Naive thymus-derived CD4-positive, alpha-beta T cell (primary cell): ENCODE measurements at regions of chr4 and their contacts with region 1.

Region 1: GRCh38 chr4:77095101-77095821 is 19.5 kb upstream of the CCNI start:
- DNase-seq: peak; percentile 46 to 67 (median 59)
- ATAC-seq: peak; percentile 98
- H3K4me3 ChIP-seq: no peak overlapping the region
- H3K4me3 Mint-ChIP-seq: no peak overlapping the region
- H3K27ac ChIP-seq: no peak overlapping the region
- H3K27ac Mint-ChIP-seq: no peak overlapping the region
- H3K4me1 ChIP-seq: peaks cover 0 to 2% of the 10 kb centered on the region in 2 donors
- H3K4me1 Mint-ChIP-seq: peaks cover 8 to 20% (median 16%) of the 10 kb centered on the region in 7 donors
- H3K27me3 ChIP-seq: no peaks in the 10 kb centered on the region
- H3K27me3 Mint-ChIP-seq: no peaks in the 10 kb centered on the region

Region 2: GRCh38 chr4:76511947-76512346 is 583.3 kb before region 1 on chr4:
- CTCF ChIA-PET with region 1: no interaction called
- POLR2A ChIA-PET with region 1: no interaction called
- intact Hi-C with region 1: loop called in 1 of 2 experiments (anchors 5 kb)
- DNase-seq: no peak
- ATAC-seq: no peak
- H3K4me3 ChIP-seq: no peak overlapping the region
- H3K4me3 Mint-ChIP-seq: no peak overlapping the region
- H3K27ac ChIP-seq: no peak overlapping the region
- H3K27ac Mint-ChIP-seq: no peak overlapping the region
- H3K4me1 ChIP-seq: no peaks in the 10 kb centered on the region
- H3K4me1 Mint-ChIP-seq: no peaks in the 10 kb centered on the region
- H3K27me3 ChIP-seq: no peaks in the 10 kb centered on the region
- H3K27me3 Mint-ChIP-seq: peaks cover 0 to 6% (median 4%) of the 10 kb centered on the region in 5 donors

Region 3: DNA sequence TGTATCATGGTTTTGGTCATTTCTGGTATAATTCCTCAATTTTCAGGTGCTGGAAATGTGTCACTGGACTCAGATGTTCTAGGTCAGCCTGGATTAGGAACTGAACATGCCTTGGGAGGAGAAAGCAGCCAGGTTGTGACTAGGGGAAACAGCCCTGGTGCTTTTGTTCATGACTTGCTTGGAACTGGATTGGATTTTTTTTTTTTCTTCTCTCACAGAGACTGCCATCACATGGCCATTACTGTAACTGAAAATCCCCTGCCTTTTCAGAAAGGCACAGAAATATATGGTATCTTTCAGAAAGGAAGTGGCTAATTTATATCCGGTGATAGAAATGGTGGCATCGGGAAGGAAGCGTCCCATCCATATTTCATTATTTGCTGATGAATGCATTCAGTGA is 111.1 kb before region 1 on chr4:
- CTCF ChIA-PET with region 1: no interaction called
- POLR2A ChIA-PET with region 1: no interaction called
- intact Hi-C with region 1: no loop called
- DNase-seq: peak in 4 of 9 donors; percentile 17 to 34 (median 22)
- ATAC-seq: peak; percentile 68
- H3K4me3 ChIP-seq: no peak overlapping the region
- H3K4me3 Mint-ChIP-seq: peak overlapping the region; percentile 19 to 72 (median 52)
- H3K27ac ChIP-seq: no peak overlapping the region
- H3K27ac Mint-ChIP-seq: peak overlapping the region in 6 of 9 donors; percentile 33 to 61 (median 44)
- H3K4me1 ChIP-seq: peaks cover 35 to 37% of the 10 kb centered on the region in 2 donors
- H3K4me1 Mint-ChIP-seq: peaks cover 36 to 92% (median 79%) of the 10 kb centered on the region in 7 donors
- H3K27me3 ChIP-seq: no peaks in the 10 kb centered on the region
- H3K27me3 Mint-ChIP-seq: peaks cover 0 to 34% (median 0%) of the 10 kb centered on the region in 5 donors

Region 4: DNA sequence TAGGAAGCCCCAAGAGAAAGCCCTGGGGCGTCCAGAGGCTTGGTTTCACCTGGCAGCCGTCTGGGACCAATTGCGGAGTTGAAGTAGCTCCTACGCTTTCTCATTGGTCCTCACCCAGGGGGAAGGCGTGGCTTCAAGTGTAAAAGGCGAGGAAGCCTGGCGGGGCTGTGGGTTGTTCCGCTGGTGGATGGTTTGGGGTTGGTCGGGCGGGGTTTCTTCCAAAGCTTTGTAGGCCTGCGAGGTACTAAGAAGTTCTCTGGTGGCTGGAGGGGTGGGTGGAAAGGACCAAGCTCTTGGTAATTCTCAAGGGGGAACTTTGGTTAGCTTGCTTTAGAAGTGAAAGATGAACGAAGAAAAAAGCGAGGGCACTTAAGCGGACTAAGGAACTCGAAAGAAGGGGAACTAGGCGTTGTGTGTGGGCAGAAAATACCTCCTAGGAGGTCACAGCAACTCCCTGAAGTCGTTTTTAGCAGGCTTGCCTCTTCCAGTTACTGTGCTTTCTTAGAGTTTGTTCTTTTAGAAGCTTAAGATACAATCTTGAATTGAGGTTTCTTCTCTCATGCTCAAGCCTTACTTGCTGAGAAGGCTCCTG is 98.3 kb after region 1 on chr4:
- CTCF ChIA-PET with region 1: interaction called, 147 read pairs
- POLR2A ChIA-PET with region 1: no interaction called
- intact Hi-C with region 1: no loop called
- DNase-seq: peak; percentile 47 to 79 (median 72)
- ATAC-seq: peak; percentile 95
- H3K4me3 ChIP-seq: peak overlapping the region; percentile 25
- H3K4me3 Mint-ChIP-seq: peak overlapping the region; percentile 78 to 93 (median 90)
- H3K27ac ChIP-seq: peak overlapping the region; percentile 52
- H3K27ac Mint-ChIP-seq: peak overlapping the region; percentile 88 to 97 (median 92)
- H3K4me1 ChIP-seq: peaks cover 0 to 6% of the 10 kb centered on the region in 2 donors
- H3K4me1 Mint-ChIP-seq: peaks cover 5 to 22% (median 18%) of the 10 kb centered on the region in 7 donors
- H3K27me3 ChIP-seq: peaks cover 0 to 5% of the 10 kb centered on the region in 2 donors
- H3K27me3 Mint-ChIP-seq: peaks cover 0 to 10% (median 0%) of the 10 kb centered on the region in 5 donors

Region 5: GRCh38 chr4:77308843-77309242 is 213.6 kb after region 1 on chr4:
- CTCF ChIA-PET with region 1: no interaction called
- POLR2A ChIA-PET with region 1: no interaction called
- intact Hi-C with region 1: loop called (anchors 2 to 5 kb)
- DNase-seq: peak in 1 of 9 donors; percentile 28
- ATAC-seq: peak; percentile 41
- H3K4me3 ChIP-seq: no peak overlapping the region
- H3K4me3 Mint-ChIP-seq: no peak overlapping the region
- H3K27ac ChIP-seq: no peak overlapping the region
- H3K27ac Mint-ChIP-seq: no peak overlapping the region
- H3K4me1 ChIP-seq: no peaks in the 10 kb centered on the region
- H3K4me1 Mint-ChIP-seq: no peaks in the 10 kb centered on the region
- H3K27me3 ChIP-seq: peaks cover 0 to 3% of the 10 kb centered on the region in 2 donors
- H3K27me3 Mint-ChIP-seq: peaks cover 0 to 10% (median 4%) of the 10 kb centered on the region in 5 donors